ENCODE measurements at regions of chr16 and their contacts with region 1.

Region 1: GRCh38 chr16:81798311-81799137 is 19.4 kb downstream of the PLCG2 start:
- DNase-seq: peak; percentile 29 to 40
- ATAC-seq: peak; percentile 35 to 45 (median 39)
- H3K4me3 ChIP-seq: no peak overlapping the region
- H3K4me3 Mint-ChIP-seq: peak overlapping the region; percentile 67
- H3K27ac ChIP-seq: peak overlapping the region; percentile 93
- H3K27ac Mint-ChIP-seq: peak overlapping the region; percentile 92 to 99
- H3K4me1 ChIP-seq: peaks cover 49% of the 10 kb centered on the region
- H3K4me1 Mint-ChIP-seq: peaks cover 68 to 73% of the 10 kb centered on the region in 2 donors
- H3K27me3 ChIP-seq: no peaks in the 10 kb centered on the region
- H3K27me3 Mint-ChIP-seq: no peaks in the 10 kb centered on the region
- CTCF ChIP-seq: no peak

Region 2: DNA sequence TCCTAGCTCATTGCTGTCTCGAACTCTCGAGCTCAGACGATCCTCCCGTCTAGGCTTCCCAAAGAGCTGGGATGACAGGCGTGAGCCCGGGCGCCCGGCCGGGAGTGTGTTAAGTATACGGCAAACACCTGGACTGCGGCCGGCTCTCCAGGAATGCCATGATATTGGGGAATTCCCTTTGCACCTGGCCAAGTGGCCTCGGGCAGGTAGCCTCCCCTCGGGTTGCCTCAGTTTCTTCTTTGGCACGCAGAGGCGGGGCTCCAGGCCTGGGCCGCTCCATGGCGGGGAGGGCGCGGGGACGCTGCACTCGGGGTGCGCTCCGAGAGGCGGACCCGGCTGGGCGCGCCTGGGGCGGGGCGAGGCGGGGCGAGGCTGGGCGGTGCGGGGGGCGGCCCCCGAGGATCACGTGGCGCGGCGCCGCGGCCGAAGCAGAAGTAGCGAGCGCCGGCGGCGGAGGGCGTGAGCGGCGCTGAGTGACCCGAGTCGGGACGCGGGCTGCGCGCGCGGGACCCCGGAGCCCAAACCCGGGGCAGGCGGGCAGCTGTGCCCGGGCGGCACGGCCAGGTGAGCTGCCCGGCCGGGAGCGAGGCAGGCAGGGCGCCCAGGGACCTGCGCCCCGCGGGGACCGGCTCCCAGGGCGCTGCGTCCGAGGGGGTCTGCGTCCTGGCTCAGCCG is 19.5 kb before region 1 on chr16 and contains the start of gene PLCG2:
- intact Hi-C with region 1: loop called (anchors 2 kb)
- DNase-seq: peak; percentile 78 to 88
- ATAC-seq: peak; percentile 96 to 99 (median 98)
- H3K4me3 ChIP-seq: peak within 1 kb of the TSS; percentile 90
- H3K4me3 Mint-ChIP-seq: peak within 1 kb of the TSS; percentile 94
- H3K27ac ChIP-seq: peak within 1 kb of the TSS; percentile 68
- H3K27ac Mint-ChIP-seq: peak within 1 kb of the TSS; percentile 85 to 89
- H3K4me1 ChIP-seq: peaks cover 51% of the 10 kb centered on the region
- H3K4me1 Mint-ChIP-seq: peaks cover 52 to 60% of the 10 kb centered on the region in 2 donors
- H3K27me3 ChIP-seq: no peaks in the 10 kb centered on the region
- H3K27me3 Mint-ChIP-seq: no peaks in the 10 kb centered on the region
- CTCF ChIP-seq: no peak
- total RNA-seq, gene PLCG2: 250 to 298 (median 285) TPM

Region 3: DNA sequence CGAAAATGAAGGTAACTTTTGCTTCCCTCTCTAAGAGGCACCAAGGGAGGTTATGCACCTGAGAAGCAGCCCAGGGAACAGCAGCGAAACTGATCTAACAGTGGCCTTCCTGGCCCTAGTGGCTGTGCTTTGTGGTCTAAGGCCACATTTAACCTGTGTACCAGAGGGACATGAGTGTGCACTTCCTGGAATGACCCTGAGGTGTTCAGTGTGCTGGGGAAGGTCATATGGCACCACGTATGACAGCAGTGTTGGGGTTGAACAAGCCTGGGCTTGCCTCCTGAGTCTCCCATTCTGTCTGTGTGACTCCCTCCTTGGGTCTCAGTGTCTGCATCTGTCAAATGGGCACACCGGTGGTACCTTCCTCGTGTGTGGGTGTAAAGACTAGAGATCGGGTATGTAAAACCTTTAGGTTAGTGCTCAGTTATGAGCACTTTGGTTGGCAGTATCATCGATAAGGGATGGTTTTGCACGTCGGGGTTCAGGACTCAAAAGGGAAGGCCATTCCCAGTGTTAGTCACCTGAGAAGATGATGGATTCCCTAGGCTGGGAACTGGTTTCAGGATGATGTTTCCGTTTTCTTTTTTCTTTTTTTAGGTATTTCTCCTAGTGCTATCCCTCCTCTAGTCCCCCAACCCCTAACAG is 12.5 kb after region 1 on chr16:
- intact Hi-C with region 1: loop called (anchors 1 kb)
- DNase-seq: no peak
- ATAC-seq: peak; percentile 19 to 48 (median 41)
- H3K4me3 ChIP-seq: no peak overlapping the region
- H3K4me3 Mint-ChIP-seq: peak overlapping the region; percentile 86
- H3K27ac ChIP-seq: peak overlapping the region; percentile 86
- H3K27ac Mint-ChIP-seq: peak overlapping the region; percentile 98 to 99
- H3K4me1 ChIP-seq: peaks cover 80% of the 10 kb centered on the region
- H3K4me1 Mint-ChIP-seq: peaks cover 92 to 94% of the 10 kb centered on the region in 2 donors
- H3K27me3 ChIP-seq: no peaks in the 10 kb centered on the region
- H3K27me3 Mint-ChIP-seq: no peaks in the 10 kb centered on the region
- CTCF ChIP-seq: no peak